T-cell (primary cell): ENCODE measurements at regions of chr7 and their contacts with region 1.

Region 1: GRCh38 chr7:155796381-155797261 is 15.6 kb downstream of the SHH start:
- DNase-seq: peak in 32 of 35 experiments; percentile 15 to 70 (median 46)
- ATAC-seq: peak; percentile 67 to 81 (median 73)
- H3K4me3 ChIP-seq: no peak overlapping the region
- H3K4me3 Mint-ChIP-seq: no peak overlapping the region
- H3K27ac ChIP-seq: no peak overlapping the region
- H3K27ac Mint-ChIP-seq: no peak overlapping the region
- H3K4me1 ChIP-seq: peaks cover 0 to 10% of the 10 kb centered on the region in 2 experiments
- H3K4me1 Mint-ChIP-seq: peaks cover 4 to 7% (median 5%) of the 10 kb centered on the region in 3 donors
- H3K27me3 ChIP-seq: peaks cover 11 to 57% of the 10 kb centered on the region in 2 experiments
- H3K27me3 Mint-ChIP-seq: peaks cover 28 to 39% of the 10 kb centered on the region in 2 donors

Region 2: GRCh38 chr7:155685070-155685790 is 111.4 kb before region 1 on chr7:
- CTCF ChIA-PET with region 1: no interaction called
- POLR2A ChIA-PET with region 1: no interaction called
- DNase-seq: peak in 17 of 35 experiments; percentile 2 to 31 (median 9)
- ATAC-seq: peak in 2 of 4 experiments; percentile 30 to 89
- H3K4me3 ChIP-seq: no peak overlapping the region
- H3K4me3 Mint-ChIP-seq: peak overlapping the region; percentile 29 to 59 (median 34)
- H3K27ac ChIP-seq: no peak overlapping the region
- H3K27ac Mint-ChIP-seq: peak overlapping the region; percentile 53 to 73
- H3K4me1 ChIP-seq: peaks cover 4 to 8% of the 10 kb centered on the region in 2 experiments
- H3K4me1 Mint-ChIP-seq: peaks cover 76 to 84% (median 84%) of the 10 kb centered on the region in 3 donors
- H3K27me3 ChIP-seq: no peaks in the 10 kb centered on the region
- H3K27me3 Mint-ChIP-seq: no peaks in the 10 kb centered on the region

Region 3: DNA sequence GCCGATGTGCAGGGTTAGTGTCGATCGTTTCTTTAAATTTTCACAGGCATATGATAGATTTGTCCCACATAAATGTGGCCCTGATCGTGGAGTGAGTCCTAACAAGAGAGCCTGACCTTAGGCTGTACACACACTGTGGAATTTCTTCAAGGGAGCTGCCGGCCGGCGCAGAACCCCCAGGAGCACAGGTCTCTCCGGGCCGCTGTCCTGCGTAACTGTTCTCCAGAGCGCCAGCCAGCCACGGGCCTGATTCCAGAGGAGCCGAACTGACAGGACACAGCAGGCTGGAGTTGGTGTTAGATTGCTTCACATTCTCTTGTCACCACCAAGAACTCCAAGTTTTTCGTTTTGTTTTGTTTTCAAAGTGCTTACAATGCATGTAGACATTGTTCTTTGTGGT is 21.7 kb before region 1 on chr7:
- CTCF ChIA-PET with region 1: no interaction called
- POLR2A ChIA-PET with region 1: no interaction called
- DNase-seq: no peak
- ATAC-seq: no peak
- H3K4me3 ChIP-seq: no peak overlapping the region
- H3K4me3 Mint-ChIP-seq: no peak overlapping the region
- H3K27ac ChIP-seq: no peak overlapping the region
- H3K27ac Mint-ChIP-seq: no peak overlapping the region
- H3K4me1 ChIP-seq: no peaks in the 10 kb centered on the region
- H3K4me1 Mint-ChIP-seq: peaks cover 0 to 6% (median 0%) of the 10 kb centered on the region in 3 donors
- H3K27me3 ChIP-seq: no peaks in the 10 kb centered on the region
- H3K27me3 Mint-ChIP-seq: no peaks in the 10 kb centered on the region

Region 4: DNA sequence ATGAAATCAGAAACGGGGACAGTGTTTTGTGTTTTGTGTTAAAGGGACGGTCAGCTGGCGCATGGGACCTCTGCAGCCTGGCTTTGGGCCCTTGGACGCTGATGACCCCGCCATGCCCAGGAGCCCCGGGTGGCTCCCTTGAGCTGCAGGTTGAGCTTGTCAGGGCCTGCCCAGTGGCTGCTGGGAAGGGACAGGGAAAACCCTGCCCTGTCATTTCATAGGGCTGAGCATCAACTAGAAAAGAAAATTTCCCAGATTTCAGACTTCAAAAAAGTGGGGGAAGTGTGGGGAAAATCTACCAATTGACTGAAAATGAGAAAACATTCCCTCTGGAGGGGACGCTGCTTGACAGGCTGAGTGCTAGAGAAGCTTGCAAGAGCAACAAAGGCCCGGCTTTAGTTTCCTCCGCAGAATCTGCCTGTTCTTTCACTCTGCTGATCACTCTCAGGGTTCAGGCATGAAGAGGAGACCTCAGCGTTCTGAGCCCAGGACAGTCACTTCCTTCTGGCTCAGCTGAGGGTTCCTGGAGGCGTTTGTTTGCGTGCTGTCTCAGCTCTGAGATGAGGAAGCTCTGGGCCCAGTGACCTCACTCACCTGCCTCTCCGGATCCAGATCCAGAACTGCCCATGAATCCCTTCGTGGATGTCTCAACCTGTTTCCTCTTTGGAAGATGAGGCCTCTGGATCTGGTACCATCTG is 1521.5 kb after region 1 on chr7:
- CTCF ChIA-PET with region 1: interaction called in 1 of 2 experiments, 12 read pairs
- POLR2A ChIA-PET with region 1: no interaction called
- DNase-seq: no peak
- ATAC-seq: no peak
- H3K4me3 ChIP-seq: no peak overlapping the region
- H3K4me3 Mint-ChIP-seq: no peak overlapping the region
- H3K27ac ChIP-seq: no peak overlapping the region
- H3K27ac Mint-ChIP-seq: peak overlapping the region in 1 of 2 donors; percentile 77
- H3K4me1 ChIP-seq: no peaks in the 10 kb centered on the region
- H3K4me1 Mint-ChIP-seq: peaks cover 0 to 6% (median 4%) of the 10 kb centered on the region in 3 donors
- H3K27me3 ChIP-seq: peaks cover 0 to 3% of the 10 kb centered on the region in 2 experiments
- H3K27me3 Mint-ChIP-seq: no peaks in the 10 kb centered on the region